CD8-positive, alpha-beta memory T cell (primary cell): ENCODE measurements at regions of chr5 and their contacts with region 1.

Region 1: DNA sequence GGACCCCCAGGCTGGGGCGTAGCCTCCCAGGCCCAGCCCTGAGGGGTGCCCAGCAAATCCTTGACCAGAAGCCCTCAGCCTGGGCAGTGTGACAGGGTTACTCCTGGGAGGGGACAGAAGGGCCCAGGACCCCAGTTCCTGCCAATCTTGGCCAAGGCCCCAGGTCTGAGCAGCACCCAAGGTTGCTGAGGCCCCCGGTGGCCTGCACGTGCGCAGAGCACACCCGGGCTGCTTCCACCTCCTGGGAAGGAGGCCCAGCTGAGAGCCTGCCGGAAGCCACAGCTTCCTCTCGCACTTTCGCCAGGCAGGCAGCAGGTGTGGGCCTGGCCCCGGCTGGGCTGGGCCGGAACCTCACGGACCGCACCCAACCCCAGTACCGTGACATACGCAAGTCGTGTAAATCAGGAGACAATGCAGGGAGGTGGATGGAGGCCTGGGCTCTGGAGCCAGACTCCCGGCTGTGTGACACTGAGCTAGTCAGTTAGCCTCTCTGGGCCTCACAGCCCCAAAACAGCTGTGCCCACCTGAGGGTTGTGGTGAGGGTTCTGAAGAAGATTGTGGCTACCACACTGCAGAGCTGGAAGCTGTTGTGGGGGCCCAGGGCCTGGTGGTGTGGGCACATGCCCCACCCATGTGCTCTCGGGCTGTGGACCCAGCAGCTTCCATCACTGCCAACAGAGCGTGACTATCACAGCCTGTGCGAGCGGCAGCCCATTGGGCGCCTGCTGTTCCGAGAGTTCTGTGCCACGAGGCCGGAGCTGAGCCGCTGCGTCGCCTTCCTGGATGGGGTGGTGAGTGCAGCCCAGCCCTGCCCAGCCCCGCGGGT is 5.1 kb downstream of the GRK6 start:
- DNase-seq: peak; percentile 63 to 88 (median 78)
- H3K4me3 ChIP-seq: peak overlapping the region; percentile 88
- H3K4me3 Mint-ChIP-seq: peak overlapping the region; percentile 80 to 97 (median 94)
- H3K27ac ChIP-seq: peak overlapping the region; percentile 93
- H3K27ac Mint-ChIP-seq: peak overlapping the region; percentile 81 to 99 (median 95)
- H3K4me1 ChIP-seq: peaks cover 92% of the 10 kb centered on the region
- H3K4me1 Mint-ChIP-seq: peaks cover 58 to 88% (median 60%) of the 10 kb centered on the region in 3 donors
- H3K27me3 ChIP-seq: no peaks in the 10 kb centered on the region
- H3K27me3 Mint-ChIP-seq: peaks cover 0 to 4% of the 10 kb centered on the region in 2 donors

Region 2: GRCh38 chr5:177412603-177413233 is 18.8 kb before region 1 on chr5:
- CTCF ChIA-PET with region 1: interaction called, 307 read pairs
- POLR2A ChIA-PET with region 1: interaction called, 10 read pairs
- DNase-seq: peak in 1 of 5 donors; percentile 56
- H3K4me3 ChIP-seq: peak overlapping the region; percentile 41
- H3K4me3 Mint-ChIP-seq: peak overlapping the region; percentile 61 to 83 (median 74)
- H3K27ac ChIP-seq: peak overlapping the region; percentile 12
- H3K27ac Mint-ChIP-seq: peak overlapping the region; percentile 77 to 93 (median 90)
- H3K4me1 ChIP-seq: peaks cover 43% of the 10 kb centered on the region
- H3K4me1 Mint-ChIP-seq: peaks cover 25 to 58% (median 49%) of the 10 kb centered on the region in 3 donors
- H3K27me3 ChIP-seq: no peaks in the 10 kb centered on the region
- H3K27me3 Mint-ChIP-seq: no peaks in the 10 kb centered on the region

Region 3: GRCh38 chr5:177446200-177447065 is 14.9 kb after region 1 on chr5 and contains the start of gene PRR7:
- CTCF ChIA-PET with region 1: interaction called, 326 read pairs
- POLR2A ChIA-PET with region 1: interaction called, 154 read pairs
- DNase-seq: peak; percentile 58 to 85 (median 81)
- H3K4me3 ChIP-seq: peak within 1 kb of the TSS; percentile 56
- H3K4me3 Mint-ChIP-seq: peak within 1 kb of the TSS; percentile 74 to 92 (median 85)
- H3K27ac ChIP-seq: peak within 1 kb of the TSS; percentile 66
- H3K27ac Mint-ChIP-seq: peak within 1 kb of the TSS; percentile 83 to 100 (median 98)
- H3K4me1 ChIP-seq: peaks cover 32% of the 10 kb centered on the region
- H3K4me1 Mint-ChIP-seq: peaks cover 39 to 55% (median 40%) of the 10 kb centered on the region in 3 donors
- H3K27me3 ChIP-seq: no peaks in the 10 kb centered on the region
- H3K27me3 Mint-ChIP-seq: no peaks in the 10 kb centered on the region
- total RNA-seq, gene PRR7: 14.7 to 15.3 TPM